ENCODE measurements at regions of chr12 and their contacts with region 1.

Region 1: DNA sequence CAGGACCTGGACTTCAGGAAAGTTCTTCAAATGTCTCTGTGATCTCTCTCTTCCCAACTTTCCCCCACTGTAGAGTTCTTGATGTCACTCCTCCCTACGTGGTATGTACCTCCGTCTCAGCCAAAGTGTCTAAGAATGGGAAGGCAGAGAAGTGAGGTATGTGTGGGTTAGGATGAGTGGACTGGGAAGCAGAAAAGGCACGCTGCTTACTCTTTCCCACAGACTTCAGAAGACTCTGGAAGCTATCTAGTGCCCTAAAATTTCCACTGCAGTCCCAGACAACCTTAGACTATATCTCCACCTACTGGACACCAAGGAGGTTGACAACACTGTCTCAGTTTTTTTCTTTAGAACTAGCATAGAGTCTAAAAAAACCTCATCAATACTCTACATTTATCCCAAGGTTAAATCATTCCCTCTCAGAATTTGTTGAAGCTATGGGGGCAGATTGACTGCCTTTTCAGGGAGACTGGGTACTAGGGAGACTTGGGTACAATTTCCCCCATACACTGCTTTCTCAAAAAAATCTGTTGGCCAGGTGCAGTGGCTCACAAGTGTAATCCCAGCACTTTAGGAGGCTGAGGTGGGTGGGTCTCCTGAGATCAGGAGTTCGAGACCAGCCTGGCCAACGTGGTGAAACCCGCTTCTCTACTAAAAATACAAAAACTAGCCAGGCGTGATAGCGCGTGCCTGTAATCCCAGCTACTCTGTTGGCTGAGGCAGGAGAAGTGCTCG is 20.6 kb upstream of the ITGA5 start:
- DNase-seq: no peak

Region 2: GRCh38 chr12:54379401-54380201 is 60.1 kb before region 1 on chr12:
- intact Hi-C with region 1: loop called in 1 of 2 experiments (anchors 10 kb)
- DNase-seq: peak; percentile 98

Region 3: DNA sequence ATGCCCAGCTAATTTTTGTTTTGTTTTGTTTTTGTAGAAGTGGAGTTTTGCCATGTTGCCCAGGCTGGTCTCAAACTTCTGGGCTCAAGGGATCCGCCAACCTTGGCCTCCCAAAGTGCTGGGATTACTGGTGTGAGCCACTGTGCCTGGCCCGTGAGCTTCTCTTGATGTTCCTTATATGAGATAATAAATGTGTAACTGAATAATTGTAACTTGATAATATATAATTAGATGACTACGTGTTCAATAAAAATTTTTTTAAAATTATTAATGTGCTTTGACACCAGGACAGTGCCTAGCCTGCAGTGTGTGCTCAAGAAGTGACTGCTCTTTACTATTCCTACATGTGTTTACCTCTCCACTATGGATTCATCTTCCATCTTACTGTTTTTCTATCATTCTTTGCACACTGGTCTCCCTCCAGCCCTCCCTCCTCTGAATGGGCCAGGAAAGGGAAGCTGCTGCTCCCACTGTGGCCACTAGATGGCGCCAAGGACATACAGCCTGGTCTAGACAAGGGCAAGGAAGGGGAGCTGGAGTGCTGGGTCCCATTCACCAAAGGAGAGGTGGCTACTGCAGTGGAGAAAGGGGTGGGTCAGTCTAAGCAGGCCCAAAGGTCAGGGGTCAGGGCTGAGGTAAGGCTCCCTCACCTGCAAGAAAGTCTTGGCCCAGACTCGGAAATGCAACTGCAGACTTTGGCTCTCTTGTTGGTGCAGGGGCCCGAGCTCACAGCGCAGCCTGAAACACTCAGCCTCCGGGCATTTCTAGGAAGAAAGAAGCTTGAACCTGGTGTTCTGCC is 40.5 kb before region 1 on chr12:
- intact Hi-C with region 1: loop called (anchors 5 kb)
- DNase-seq: peak; percentile 95

Region 4: GRCh38 chr12:54404061-54405004 is 35.4 kb before region 1 on chr12:
- intact Hi-C with region 1: loop called (anchors 5 kb)
- DNase-seq: no peak

Measured in posterior vena cava (tissue), 2 donors.